Spleen (tissue), 13 donors: ENCODE measurements at regions of chr1 and their contacts with region 1.

Region 1: GRCh38 chr1:170967042-170967910 is 31.9 kb downstream of the MROH9 start:
- DNase-seq: no peak
- H3K4me3 ChIP-seq: no peak overlapping the region
- H3K27ac ChIP-seq: no peak overlapping the region
- H3K4me1 ChIP-seq: no peaks in the 10 kb centered on the region
- H3K27me3 ChIP-seq: no peaks in the 10 kb centered on the region
- CTCF ChIP-seq: peak in 8 of 11 experiments; percentile 27 to 68 (median 49)
- POLR2A ChIP-seq: no peak

Region 2: GRCh38 chr1:170562646-170563338 is 404.5 kb before region 1 on chr1:
- intact Hi-C with region 1: no loop called
- DNase-seq: no peak
- H3K4me3 ChIP-seq: no peak overlapping the region
- H3K27ac ChIP-seq: peak overlapping the region; percentile 39 to 79 (median 68)
- H3K4me1 ChIP-seq: peaks cover 0 to 25% (median 12%) of the 10 kb centered on the region in 6 donors
- H3K27me3 ChIP-seq: no peaks in the 10 kb centered on the region
- CTCF ChIP-seq: no peak
- POLR2A ChIP-seq: no peak

Region 3: GRCh38 chr1:171226747-171227370 is 259.6 kb after region 1 on chr1:
- intact Hi-C with region 1: loop called (anchors 10 kb)
- DNase-seq: no peak
- H3K4me3 ChIP-seq: no peak overlapping the region
- H3K27ac ChIP-seq: no peak overlapping the region
- H3K4me1 ChIP-seq: peaks cover 0 to 2% (median 0%) of the 10 kb centered on the region in 6 donors
- H3K27me3 ChIP-seq: peaks cover 0 to 6% (median 0%) of the 10 kb centered on the region in 7 donors
- CTCF ChIP-seq: peak in 10 of 11 experiments; percentile 22 to 67 (median 46)
- POLR2A ChIP-seq: no peak

Region 4: GRCh38 chr1:171313835-171314320 is 346.6 kb after region 1 on chr1 and contains the start of gene FMO4:
- intact Hi-C with region 1: loop called (anchors 5 kb)
- DNase-seq: peak; percentile 75
- H3K4me3 ChIP-seq: peak within 1 kb of the TSS in 6 of 8 donors; percentile 11 to 57 (median 16)
- H3K27ac ChIP-seq: peak within 1 kb of the TSS in 7 of 8 donors; percentile 33 to 73 (median 68)
- H3K4me1 ChIP-seq: peaks cover 0 to 24% (median 12%) of the 10 kb centered on the region in 6 donors
- H3K27me3 ChIP-seq: no peaks in the 10 kb centered on the region
- CTCF ChIP-seq: peak; percentile 83 to 95 (median 91)
- POLR2A ChIP-seq: peak in 1 of 3 donors; percentile 15
- total RNA-seq, gene FMO4: 2.0 to 10.8 (median 4.6) TPM